PC-9 (cell line): ENCODE measurements at regions of chr2 and their contacts with region 1.

Region 1: GRCh38 chr2:171160119-171160955 is at the start of gene TLK1:
- DNase-seq: peak; percentile 67 to 76
- H3K4me3 ChIP-seq: peak within 1 kb of the TSS; percentile 93
- H3K27ac ChIP-seq: peak within 1 kb of the TSS; percentile 93
- H3K4me1 ChIP-seq: peaks cover 61% of the 10 kb centered on the region
- H3K27me3 ChIP-seq: no peaks in the 10 kb centered on the region
- CTCF ChIP-seq: no peak
- total RNA-seq, gene TLK1: 74.1 and 101 TPM in 2 replicates

Region 2: DNA sequence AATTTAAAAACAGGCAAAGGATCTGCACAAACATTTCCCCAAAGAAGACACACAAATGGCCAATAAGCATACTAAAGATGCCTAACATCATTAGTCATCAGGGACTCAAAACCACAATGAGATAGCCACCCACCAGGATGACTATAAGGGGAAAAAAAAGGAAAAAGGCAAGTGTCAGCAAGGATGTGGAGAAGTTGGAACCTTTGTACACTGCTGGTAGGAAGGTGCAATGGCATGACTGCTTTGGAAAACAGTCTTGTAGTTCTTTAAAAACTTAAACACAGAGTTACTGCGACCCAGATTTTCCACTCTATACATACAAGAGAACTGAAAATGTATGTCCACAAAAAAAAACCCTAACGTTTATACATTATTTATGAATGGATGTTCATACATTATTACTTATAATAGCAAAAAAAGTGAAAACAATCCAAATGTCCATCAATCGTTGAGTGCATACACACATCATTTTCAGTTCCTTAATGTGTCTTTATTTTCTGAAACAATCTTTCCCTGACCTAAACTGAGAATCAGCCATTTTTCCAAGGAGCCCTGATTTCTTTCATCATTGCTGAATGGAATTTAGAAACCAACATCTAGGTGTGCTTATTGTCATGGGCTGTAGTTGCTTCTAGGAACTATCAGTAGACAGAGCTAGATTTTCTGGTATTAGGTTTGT is 65.1 kb after region 1 on chr2:
- CTCF ChIA-PET with region 1: no interaction called
- POLR2A ChIA-PET with region 1: no interaction called
- intact Hi-C with region 1: loop called (anchors 2 kb)
- DNase-seq: peak; percentile 43 to 92
- H3K4me3 ChIP-seq: no peak overlapping the region
- H3K27ac ChIP-seq: peak overlapping the region; percentile 45
- H3K4me1 ChIP-seq: peaks cover 41% of the 10 kb centered on the region
- H3K27me3 ChIP-seq: no peaks in the 10 kb centered on the region
- CTCF ChIP-seq: peak; percentile 56

Region 3: DNA sequence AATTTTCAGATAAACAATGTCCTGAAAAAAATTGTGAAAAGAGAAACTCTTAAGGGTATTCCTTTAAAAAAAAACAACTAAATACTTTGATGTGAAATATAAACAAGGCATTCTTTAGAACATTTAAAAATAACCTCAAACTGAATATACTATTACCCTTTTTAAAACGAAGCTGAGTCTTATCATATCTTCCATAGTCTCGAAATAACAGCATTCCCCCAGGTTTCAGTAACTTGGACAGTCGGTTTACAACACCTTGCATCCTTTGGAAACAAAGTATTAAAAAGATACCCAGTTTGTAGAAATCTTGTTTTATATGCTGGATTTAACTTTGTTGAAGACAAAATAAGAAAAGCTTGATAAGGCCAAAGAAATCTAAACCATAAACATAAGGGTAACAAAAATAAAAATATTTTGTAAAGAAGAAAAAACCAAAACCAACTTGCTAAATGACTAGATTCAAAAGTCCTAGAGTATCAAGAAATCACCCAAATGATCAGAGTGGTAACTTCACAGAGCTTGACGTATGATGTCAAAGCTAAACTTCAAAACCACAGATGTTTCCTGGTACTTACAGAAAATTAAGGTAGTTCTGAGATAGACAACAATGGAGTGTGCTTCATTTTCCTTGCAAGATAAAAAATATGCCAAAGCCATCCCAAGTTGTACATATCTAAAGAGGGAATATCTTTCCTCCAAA is 165.7 kb after region 1 on chr2:
- CTCF ChIA-PET with region 1: no interaction called
- POLR2A ChIA-PET with region 1: interaction called, 10 read pairs
- intact Hi-C with region 1: no loop called
- DNase-seq: no peak
- H3K4me3 ChIP-seq: no peak overlapping the region
- H3K27ac ChIP-seq: no peak overlapping the region
- H3K4me1 ChIP-seq: no peaks in the 10 kb centered on the region; the same call in 1 of the 2 replicates
- H3K27me3 ChIP-seq: no peaks in the 10 kb centered on the region
- CTCF ChIP-seq: no peak

Region 4: GRCh38 chr2:171347591-171348032 is 187.3 kb after region 1 on chr2:
- CTCF ChIA-PET with region 1: interaction called, 20 read pairs
- POLR2A ChIA-PET with region 1: interaction called, 4 read pairs
- intact Hi-C with region 1: loop called (anchors 5 kb)
- DNase-seq: peak; percentile 60 to 93
- H3K4me3 ChIP-seq: no peak overlapping the region
- H3K27ac ChIP-seq: peak overlapping the region; percentile 43
- H3K4me1 ChIP-seq: peaks cover 30% of the 10 kb centered on the region
- H3K27me3 ChIP-seq: no peaks in the 10 kb centered on the region
- CTCF ChIP-seq: no peak

Region 5: DNA sequence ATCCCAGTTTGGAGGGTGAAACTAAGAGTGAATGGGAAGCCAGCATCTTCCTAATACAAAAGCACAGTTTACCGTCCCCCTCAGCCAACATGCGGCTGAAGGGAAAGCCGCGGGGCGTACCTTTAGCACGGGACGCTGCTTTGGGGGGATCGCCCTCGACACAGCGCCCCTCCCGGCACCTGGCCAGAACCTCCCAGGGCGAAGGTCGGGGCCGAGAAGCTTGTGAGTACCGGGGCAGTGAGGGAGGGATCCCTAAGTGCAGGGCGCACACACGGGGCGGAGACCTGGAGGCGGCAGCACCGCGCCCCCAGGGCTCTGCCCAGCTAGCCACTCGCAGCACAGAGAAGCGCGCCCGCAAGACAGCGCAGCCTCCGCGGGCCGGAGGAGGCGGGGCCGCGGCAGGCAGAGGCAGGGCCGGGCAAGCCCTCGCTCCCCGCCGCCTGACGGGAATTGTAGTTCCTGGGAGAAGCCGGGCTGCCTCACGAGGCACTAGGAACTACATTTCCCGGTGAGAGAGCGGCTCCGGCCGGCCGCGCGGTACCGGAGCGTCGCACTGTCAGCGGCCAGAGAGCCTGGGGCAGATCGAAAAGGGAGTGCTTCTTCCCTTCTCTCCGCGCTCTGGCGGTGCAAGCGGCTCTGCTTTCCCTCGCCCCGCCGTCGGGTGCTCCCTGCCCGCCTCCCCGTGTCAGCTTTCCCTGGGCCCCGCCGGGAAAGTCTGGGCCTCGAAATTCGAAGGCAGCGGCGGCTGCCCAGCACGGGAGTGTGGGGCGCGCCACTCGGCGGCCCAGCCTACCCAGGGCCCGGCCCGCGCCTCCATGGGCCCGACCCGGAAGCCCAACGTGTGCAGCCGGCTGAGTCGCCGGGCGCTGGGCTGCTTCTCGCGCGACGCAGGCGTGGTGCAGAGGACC is 273.7 kb after region 1 on chr2 and contains the starts of genes DCAF17 and METTL8:
- CTCF ChIA-PET with region 1: no interaction called
- POLR2A ChIA-PET with region 1: no interaction called
- intact Hi-C with region 1: loop called (anchors 1 kb)
- DNase-seq: peak; percentile 95 to 98
- H3K4me3 ChIP-seq: peak within 1 kb of the TSS; percentile 64
- H3K27ac ChIP-seq: peak within 1 kb of the TSS; percentile 93
- H3K4me1 ChIP-seq: peaks cover 25% of the 10 kb centered on the region
- H3K27me3 ChIP-seq: no peaks in the 10 kb centered on the region
- CTCF ChIP-seq: peak; percentile 50
- total RNA-seq, gene DCAF17: 22.0 and 22.1 TPM in 2 replicates
- total RNA-seq, gene METTL8: 21.8 and 24.3 TPM in 2 replicates